Breast epithelium (tissue), 4 donors: ENCODE measurements at regions of chr4 and their contacts with region 1.

Region 1: DNA sequence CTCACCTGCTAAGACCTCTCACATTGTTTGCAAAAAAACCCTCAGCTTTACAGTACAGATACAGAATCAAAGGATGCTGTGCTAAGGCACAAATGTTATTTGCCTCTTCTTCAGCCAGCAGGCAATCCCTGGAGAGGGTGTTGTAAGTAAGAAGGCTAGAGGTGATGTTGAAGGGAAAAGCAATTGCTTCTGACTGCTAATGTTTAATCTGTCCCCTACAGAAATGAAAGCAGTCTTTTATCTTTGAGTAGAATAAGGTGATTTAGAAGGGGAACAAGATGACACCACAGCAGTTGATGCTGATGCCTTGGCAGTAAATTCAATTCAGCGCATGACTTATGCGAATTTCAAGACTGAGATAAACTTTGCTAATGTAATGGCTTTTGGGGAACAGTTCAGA is 1064.8 kb upstream of the IGFBP7 start:
- DNase-seq: no peak
- H3K4me3 ChIP-seq: no peak overlapping the region
- H3K27ac ChIP-seq: no peak overlapping the region
- H3K4me1 ChIP-seq: no peaks in the 10 kb centered on the region
- H3K27me3 ChIP-seq: no peaks in the 10 kb centered on the region
- CTCF ChIP-seq: no peak
- POLR2A ChIP-seq: no peak

Region 2: DNA sequence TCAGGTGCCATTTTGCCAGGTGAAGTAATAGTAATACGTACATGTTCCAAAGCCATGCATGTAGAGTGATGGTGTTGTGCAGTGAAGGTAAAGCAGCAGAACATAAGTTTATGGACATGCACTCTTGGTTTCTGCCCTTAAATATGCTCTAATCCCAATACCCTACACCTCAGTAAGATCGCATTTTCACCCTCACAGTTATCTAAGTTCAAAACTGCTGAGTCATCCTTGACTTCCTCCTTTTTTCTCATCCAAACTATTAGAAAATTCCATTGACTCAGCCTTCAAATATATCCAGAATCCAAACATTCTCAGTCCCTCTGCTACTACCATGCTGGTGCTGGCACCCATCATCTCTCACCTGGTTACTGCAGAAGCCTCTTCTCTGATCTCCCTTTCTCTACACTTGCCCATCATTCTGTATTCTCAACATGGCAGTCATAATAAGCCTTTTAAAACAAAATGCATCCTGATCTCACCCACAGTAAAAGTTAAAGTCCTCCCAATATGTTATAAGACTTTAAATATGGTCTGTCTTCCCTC is 411.9 kb before region 1 on chr4:
- intact Hi-C with region 1: loop called (anchors 10 kb)
- DNase-seq: no peak
- H3K4me3 ChIP-seq: no peak overlapping the region
- H3K27ac ChIP-seq: no peak overlapping the region
- H3K4me1 ChIP-seq: no peaks in the 10 kb centered on the region
- H3K27me3 ChIP-seq: no peaks in the 10 kb centered on the region
- CTCF ChIP-seq: no peak
- POLR2A ChIP-seq: no peak